A549 (cell line): ENCODE measurements at regions of chr19 and their contacts with region 1.

Region 1: DNA sequence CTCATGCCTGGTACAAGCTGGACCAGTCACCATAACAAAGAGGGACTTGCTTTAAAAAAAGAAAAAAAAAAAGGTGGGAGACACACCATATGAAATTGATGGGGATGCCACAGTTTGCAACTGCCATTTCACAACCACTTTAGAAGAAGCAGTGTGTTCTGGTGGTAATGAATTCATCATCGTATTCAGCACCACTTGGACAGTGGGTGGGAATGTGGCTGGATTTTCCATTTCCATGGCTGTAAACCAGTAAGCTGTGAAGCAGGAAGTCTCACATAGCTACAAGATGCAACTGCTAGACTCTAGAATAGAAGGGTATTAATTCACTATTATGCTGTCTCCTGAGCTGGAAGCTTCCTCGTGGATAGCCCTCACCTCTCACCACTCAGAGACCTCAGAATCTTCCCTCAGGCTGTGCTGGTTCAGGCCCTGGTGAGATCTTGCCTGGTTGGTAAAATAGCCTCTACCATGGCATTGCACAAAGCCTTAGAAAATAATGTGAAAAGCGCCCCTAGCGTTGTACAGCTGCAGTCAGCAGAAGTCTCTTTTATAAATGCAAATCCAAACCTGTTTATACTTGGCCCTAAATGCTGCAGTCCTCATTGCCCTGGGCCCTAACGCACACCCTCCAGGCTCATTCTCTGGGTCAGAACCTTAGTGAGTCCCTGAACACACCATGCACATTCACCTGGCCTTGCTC is 150.7 kb downstream of the KCTD15 start:
- DNase-seq: no peak
- ATAC-seq: peak; percentile 48 to 70; a peak in 3 of 6 replicates
- H3K4me3 ChIP-seq: no peak overlapping the region
- H3K27ac ChIP-seq: no peak overlapping the region
- H3K4me1 ChIP-seq: no peaks in the 10 kb centered on the region
- CTCF ChIP-seq: peak; percentile 42; the same call in 1 of the 3 replicates
- EP300 ChIP-seq: no peak
- POLR2A ChIP-seq: no peak
- RAD21 ChIP-seq: no peak

Region 2: DNA sequence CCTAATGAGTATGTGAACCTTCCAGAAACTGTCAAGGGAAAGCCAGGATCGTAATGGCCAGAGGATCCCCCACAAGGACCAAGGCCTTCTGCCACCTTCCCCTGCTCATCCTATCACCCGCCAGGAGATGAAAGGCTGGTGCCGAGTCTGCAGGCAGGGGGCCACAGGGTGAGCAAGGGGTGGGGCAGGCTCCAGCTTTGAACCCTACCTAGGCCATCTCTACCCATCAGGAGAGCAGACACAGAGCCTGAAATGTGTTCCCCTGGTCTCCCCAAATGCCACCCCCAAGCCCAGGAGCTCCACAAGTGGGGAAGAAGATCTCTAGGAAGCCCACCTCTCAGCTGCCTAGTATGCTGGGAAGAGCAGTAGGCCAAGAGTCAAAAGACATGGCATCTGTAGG is 55.6 kb before region 1 on chr19:
- CTCF ChIA-PET with region 1: no interaction called
- POLR2A ChIA-PET with region 1: no interaction called
- DNase-seq: no peak
- ATAC-seq: no peak
- H3K4me3 ChIP-seq: no peak overlapping the region
- H3K27ac ChIP-seq: no peak overlapping the region
- H3K4me1 ChIP-seq: no peaks in the 10 kb centered on the region
- CTCF ChIP-seq: no peak
- EP300 ChIP-seq: no peak
- POLR2A ChIP-seq: no peak
- RAD21 ChIP-seq: no peak

Region 3: DNA sequence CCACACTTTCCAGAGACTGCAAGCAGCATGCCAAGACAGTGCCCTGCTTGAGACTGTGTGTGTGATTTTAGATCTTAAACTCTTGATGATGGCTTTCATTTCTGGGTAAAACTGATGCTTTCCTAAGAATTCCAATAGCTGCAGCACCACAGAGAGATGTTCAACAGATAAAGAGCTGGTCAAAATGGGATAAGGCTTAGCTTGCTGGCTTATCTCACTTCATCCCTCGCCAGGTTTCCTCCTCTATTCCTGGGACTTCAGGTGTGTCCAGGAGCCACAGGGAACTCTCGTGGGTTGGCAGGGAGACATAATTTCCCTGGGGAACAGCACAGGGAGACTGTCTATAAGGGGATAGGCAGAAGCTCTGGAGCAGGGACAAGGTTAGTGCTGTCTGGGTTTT is 13.5 kb before region 1 on chr19:
- CTCF ChIA-PET with region 1: interaction called, 27 read pairs
- POLR2A ChIA-PET with region 1: no interaction called
- DNase-seq: no peak
- ATAC-seq: no peak
- H3K4me3 ChIP-seq: no peak overlapping the region
- H3K27ac ChIP-seq: no peak overlapping the region
- H3K4me1 ChIP-seq: no peaks in the 10 kb centered on the region
- CTCF ChIP-seq: no peak
- EP300 ChIP-seq: no peak
- POLR2A ChIP-seq: no peak
- RAD21 ChIP-seq: no peak

Region 4: DNA sequence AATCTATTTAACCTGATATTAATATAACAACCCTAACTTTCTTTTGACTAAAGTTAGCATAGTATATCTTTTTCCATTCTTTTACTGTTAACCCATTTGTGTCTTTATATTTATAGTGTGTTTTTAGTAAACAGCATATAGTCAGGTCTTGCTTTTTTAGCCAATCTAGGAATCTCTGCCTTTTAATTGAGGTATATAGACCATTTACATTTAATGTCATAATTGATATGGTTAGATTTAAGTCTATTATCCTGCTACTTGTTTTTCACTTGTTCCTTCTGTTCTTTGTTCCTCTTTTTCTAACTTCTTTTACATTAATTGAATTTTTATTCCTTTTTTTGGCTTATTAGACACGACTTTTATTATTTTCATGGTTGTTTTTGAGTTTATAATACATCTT is 23.7 kb after region 1 on chr19:
- CTCF ChIA-PET with region 1: no interaction called
- POLR2A ChIA-PET with region 1: no interaction called
- DNase-seq: no peak
- ATAC-seq: no peak
- H3K4me3 ChIP-seq: no peak overlapping the region
- H3K27ac ChIP-seq: no peak overlapping the region
- H3K4me1 ChIP-seq: no peaks in the 10 kb centered on the region
- CTCF ChIP-seq: no peak
- EP300 ChIP-seq: no peak
- POLR2A ChIP-seq: no peak
- RAD21 ChIP-seq: no peak

Region 5: DNA sequence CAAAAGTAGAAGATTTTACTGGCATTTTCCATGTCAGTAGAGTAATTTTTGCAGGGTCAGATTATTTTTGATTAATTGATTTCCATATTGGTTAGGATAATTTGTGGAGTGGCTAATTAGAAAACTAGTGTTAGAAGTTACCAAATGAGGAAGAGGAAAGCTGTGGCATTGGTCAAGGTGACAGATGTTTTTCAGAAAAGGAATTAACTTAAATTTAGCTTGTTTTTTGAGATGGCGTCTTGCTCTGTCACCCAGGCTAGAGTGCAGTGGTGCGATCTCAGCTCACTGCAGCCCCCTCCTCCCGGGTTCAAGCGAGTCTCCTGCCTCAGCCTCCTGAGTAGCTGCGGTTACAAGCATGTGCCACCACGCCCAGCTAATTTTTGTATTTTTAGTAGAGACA is 253.7 kb after region 1 on chr19:
- CTCF ChIA-PET with region 1: no interaction called
- POLR2A ChIA-PET with region 1: no interaction called
- DNase-seq: no peak
- ATAC-seq: no peak
- H3K4me3 ChIP-seq: no peak overlapping the region
- H3K27ac ChIP-seq: no peak overlapping the region
- H3K4me1 ChIP-seq: peaks cover 8% of the 10 kb centered on the region
- CTCF ChIP-seq: no peak
- EP300 ChIP-seq: no peak
- POLR2A ChIP-seq: no peak
- RAD21 ChIP-seq: no peak